ENCODE measurements at regions of chr10 and their contacts with region 1.

Region 1: DNA sequence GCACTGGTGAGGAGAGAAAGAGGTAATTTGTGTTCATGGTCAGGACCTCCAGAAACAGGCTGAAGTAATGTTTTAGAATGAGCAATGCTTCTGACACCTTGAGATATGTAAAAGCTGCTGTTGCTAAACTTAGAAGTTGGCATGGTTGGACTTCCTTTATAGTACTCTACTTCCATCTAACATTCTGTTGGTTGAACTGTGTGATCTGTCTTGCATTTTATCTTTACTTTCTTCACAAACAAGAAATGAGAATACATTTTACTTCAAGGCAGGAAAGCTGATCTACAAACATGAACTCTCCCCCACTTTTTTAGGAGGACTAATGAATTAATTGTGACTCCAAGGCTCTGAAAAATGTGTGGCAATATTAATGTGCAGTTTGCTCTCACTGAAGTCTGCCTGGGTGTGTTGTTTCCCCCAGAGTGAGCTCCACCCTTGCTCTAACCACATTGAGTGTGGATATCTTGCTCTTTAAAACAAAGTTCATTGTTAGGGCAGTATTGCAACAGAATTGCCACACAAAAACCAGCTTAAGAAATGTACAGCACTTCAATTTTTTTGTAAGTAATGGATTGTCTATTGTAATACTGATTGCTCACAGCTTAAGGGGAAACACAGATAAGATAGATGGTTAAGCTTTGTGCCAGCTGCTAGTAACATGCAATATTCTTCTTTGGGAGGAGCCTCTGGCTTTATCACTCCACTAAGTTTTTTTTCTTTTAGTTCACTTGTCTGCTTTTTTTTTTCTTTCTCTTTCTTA is 69.0 kb downstream of the ADD3 start:
- DNase-seq: peak; percentile 59 to 73 (median 66)
- H3K4me3 ChIP-seq: peak overlapping the region; percentile 48 to 53
- H3K4me3 Mint-ChIP-seq: peak overlapping the region; percentile 87 to 96 (median 92)
- H3K27ac ChIP-seq: peak overlapping the region; percentile 59
- H3K27ac Mint-ChIP-seq: peak overlapping the region; percentile 89 to 98 (median 92)
- H3K4me1 ChIP-seq: peaks cover 100% of the 10 kb centered on the region
- H3K4me1 Mint-ChIP-seq: peaks cover 69 to 92% (median 81%) of the 10 kb centered on the region in 4 donors
- H3K27me3 ChIP-seq: no peaks in the 10 kb centered on the region
- H3K27me3 Mint-ChIP-seq: no peaks in the 10 kb centered on the region

Region 2: GRCh38 chr10:109978481-109978880 is 98.3 kb before region 1 on chr10:
- CTCF ChIA-PET with region 1: interaction called, 10 read pairs
- POLR2A ChIA-PET with region 1: no interaction called
- intact Hi-C with region 1: no loop called
- DNase-seq: peak; percentile 51 to 63 (median 58)
- H3K4me3 ChIP-seq: no peak overlapping the region
- H3K4me3 Mint-ChIP-seq: no peak overlapping the region
- H3K27ac ChIP-seq: no peak overlapping the region
- H3K27ac Mint-ChIP-seq: no peak overlapping the region
- H3K4me1 ChIP-seq: no peaks in the 10 kb centered on the region
- H3K4me1 Mint-ChIP-seq: peaks cover 0 to 5% (median under 1%) of the 10 kb centered on the region in 4 donors
- H3K27me3 ChIP-seq: no peaks in the 10 kb centered on the region
- H3K27me3 Mint-ChIP-seq: no peaks in the 10 kb centered on the region

Region 3: GRCh38 chr10:110059925-110060324 is 16.8 kb before region 1 on chr10:
- CTCF ChIA-PET with region 1: interaction called, 19 read pairs
- POLR2A ChIA-PET with region 1: interaction called, 36 read pairs
- intact Hi-C with region 1: no loop called
- DNase-seq: no peak
- H3K4me3 ChIP-seq: no peak overlapping the region
- H3K4me3 Mint-ChIP-seq: peak overlapping the region in 6 of 8 donors; percentile 50 to 72 (median 62)
- H3K27ac ChIP-seq: no peak overlapping the region
- H3K27ac Mint-ChIP-seq: peak overlapping the region; percentile 1 to 85 (median 79)
- H3K4me1 ChIP-seq: peaks cover 95% of the 10 kb centered on the region
- H3K4me1 Mint-ChIP-seq: peaks cover 67 to 92% (median 79%) of the 10 kb centered on the region in 4 donors
- H3K27me3 ChIP-seq: no peaks in the 10 kb centered on the region
- H3K27me3 Mint-ChIP-seq: no peaks in the 10 kb centered on the region

Region 4: GRCh38 chr10:110093722-110094121 is 17.0 kb after region 1 on chr10:
- CTCF ChIA-PET with region 1: interaction called, 15 read pairs
- POLR2A ChIA-PET with region 1: interaction called, 19 read pairs
- intact Hi-C with region 1: loop called (anchors 2 kb)
- DNase-seq: no peak
- H3K4me3 ChIP-seq: no peak overlapping the region
- H3K4me3 Mint-ChIP-seq: peak overlapping the region in 2 of 8 donors; percentile 2 to 17
- H3K27ac ChIP-seq: no peak overlapping the region
- H3K27ac Mint-ChIP-seq: no peak overlapping the region
- H3K4me1 ChIP-seq: peaks cover 66% of the 10 kb centered on the region
- H3K4me1 Mint-ChIP-seq: peaks cover 42 to 86% (median 62%) of the 10 kb centered on the region in 4 donors
- H3K27me3 ChIP-seq: no peaks in the 10 kb centered on the region
- H3K27me3 Mint-ChIP-seq: no peaks in the 10 kb centered on the region